Common myeloid progenitor, CD34-positive (primary cell): ENCODE measurements at regions of chr11 and their contacts with region 1.

Region 1: DNA sequence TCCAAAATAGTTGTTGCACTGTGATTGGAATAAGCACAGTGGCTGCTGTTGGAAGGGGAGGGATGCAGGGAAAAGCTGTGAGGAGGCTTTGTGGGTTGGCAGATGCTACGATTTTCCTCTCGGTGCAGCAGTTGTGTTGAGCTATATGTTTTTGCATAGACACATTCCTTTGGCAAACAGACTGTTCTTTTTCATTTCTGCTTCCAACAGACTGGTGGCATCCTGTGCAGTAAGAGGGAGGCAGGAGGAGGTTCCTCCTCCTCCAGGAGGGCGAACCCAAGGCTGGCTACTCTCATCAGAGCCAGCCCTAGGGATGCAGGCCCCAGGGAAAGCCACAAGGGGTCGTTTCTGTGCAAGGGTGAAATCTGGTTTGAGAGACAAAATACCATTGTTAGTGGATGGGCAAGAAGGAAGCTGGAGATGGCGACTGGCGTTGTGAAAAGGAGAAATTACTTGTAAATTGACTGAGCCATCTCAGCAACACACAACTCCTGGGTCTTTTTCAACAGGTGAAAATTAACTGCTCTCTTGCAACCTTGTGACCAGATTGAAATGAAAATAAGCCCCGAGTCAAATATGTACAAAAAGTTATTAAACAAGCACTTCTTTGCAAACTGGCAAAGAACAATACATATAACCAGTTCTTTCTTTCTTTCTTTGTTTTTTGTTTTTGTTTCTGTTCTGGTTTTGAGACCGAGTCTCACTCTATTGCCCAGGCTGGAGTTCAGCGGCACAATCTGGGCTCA is 26.5 kb upstream of the UBASH3B start:
- DNase-seq: peak; percentile 73 to 85 (median 81)
- H3K4me3 ChIP-seq: no peak overlapping the region
- H3K27ac ChIP-seq: no peak overlapping the region
- H3K4me1 ChIP-seq: peaks cover 0 to 18% (median 2%) of the 10 kb centered on the region in 4 experiments
- H3K27me3 ChIP-seq: no peaks in the 10 kb centered on the region

Region 2: GRCh38 chr11:122681735-122682134 is 52.8 kb after region 1 on chr11:
- CTCF ChIA-PET with region 1: no interaction called
- POLR2A ChIA-PET with region 1: no interaction called
- DNase-seq: peak in 2 of 3 donors; percentile 59 to 67
- H3K4me3 ChIP-seq: no peak overlapping the region
- H3K27ac ChIP-seq: no peak overlapping the region
- H3K4me1 ChIP-seq: peaks cover 0 to 32% (median 12%) of the 10 kb centered on the region in 4 experiments
- H3K27me3 ChIP-seq: no peaks in the 10 kb centered on the region

Region 3: GRCh38 chr11:122765487-122766131 is 136.6 kb after region 1 on chr11:
- CTCF ChIA-PET with region 1: interaction called, 11 read pairs
- POLR2A ChIA-PET with region 1: no interaction called
- DNase-seq: peak in 1 of 3 donors; percentile 20
- H3K4me3 ChIP-seq: no peak overlapping the region
- H3K27ac ChIP-seq: no peak overlapping the region
- H3K4me1 ChIP-seq: peaks cover 0 to 5% (median 0%) of the 10 kb centered on the region in 4 experiments
- H3K27me3 ChIP-seq: no peaks in the 10 kb centered on the region

Region 4: DNA sequence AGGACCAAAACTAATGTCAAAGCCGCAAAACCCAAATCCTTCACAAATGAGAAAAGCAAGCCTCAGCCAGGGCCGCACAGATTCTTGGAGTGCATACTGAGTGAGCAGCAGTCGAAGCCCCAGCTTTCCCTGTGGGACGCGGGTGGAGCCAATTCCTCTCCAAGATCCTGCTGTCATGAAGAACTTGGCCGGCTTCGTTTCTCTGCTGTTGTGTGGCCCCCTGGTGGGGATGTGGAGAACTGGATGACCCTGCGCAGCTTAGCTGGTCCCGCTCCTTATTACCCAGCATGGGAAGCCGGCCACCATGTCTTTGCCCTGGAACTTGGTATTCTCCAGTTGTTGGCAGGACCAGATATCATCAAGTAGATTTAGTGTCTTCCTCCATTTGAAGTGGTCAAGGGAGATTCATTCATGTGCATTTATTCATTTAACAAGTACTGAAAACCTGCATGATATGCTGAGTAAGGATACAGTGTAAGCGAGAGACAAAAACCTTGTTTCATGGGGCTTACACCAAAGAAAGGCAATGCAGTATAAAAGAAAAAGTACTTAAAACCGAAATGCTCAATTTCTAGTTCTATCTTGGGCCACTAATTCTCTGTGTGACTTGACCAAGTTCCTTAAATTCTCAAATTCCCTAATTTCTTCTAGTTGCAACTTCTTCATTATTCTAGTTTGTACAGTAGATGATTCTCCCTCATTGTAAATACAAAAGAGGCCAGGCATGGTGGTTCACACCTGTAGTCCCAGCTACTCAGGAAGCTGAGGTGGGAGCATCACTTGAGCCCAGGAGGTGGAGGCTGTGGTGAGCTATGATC is 152.6 kb after region 1 on chr11:
- CTCF ChIA-PET with region 1: interaction called, 349 read pairs
- POLR2A ChIA-PET with region 1: no interaction called
- DNase-seq: peak; percentile 71 to 78 (median 72)
- H3K4me3 ChIP-seq: no peak overlapping the region
- H3K27ac ChIP-seq: no peak overlapping the region
- H3K4me1 ChIP-seq: peaks cover 0 to 27% (median 20%) of the 10 kb centered on the region in 4 experiments
- H3K27me3 ChIP-seq: no peaks in the 10 kb centered on the region